ENCODE measurements at regions of chr14 and their contacts with region 1.

Region 1: DNA sequence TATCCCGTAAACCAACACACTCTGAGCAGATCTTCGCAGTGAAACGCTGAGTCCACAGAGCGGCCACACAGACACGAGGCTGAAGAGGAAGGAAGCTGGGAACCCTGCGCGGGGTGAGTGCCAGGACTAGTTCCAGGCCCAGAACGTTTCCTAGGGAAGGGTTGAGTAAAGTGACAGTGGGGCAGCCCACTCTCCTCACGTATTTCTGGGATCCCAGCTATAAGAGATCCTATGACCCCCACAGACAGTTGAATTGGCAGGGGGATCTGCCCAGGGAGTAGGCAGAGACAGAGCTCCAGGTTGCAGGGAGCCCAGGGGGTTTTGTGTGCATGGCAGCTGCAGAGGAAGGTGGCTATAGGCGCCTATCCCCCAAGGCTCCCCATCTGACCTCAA is 51.1 kb downstream of the GTF2A1 start:
- DNase-seq: peak; percentile 66 to 76
- ATAC-seq: peak; percentile 69

Region 2: DNA sequence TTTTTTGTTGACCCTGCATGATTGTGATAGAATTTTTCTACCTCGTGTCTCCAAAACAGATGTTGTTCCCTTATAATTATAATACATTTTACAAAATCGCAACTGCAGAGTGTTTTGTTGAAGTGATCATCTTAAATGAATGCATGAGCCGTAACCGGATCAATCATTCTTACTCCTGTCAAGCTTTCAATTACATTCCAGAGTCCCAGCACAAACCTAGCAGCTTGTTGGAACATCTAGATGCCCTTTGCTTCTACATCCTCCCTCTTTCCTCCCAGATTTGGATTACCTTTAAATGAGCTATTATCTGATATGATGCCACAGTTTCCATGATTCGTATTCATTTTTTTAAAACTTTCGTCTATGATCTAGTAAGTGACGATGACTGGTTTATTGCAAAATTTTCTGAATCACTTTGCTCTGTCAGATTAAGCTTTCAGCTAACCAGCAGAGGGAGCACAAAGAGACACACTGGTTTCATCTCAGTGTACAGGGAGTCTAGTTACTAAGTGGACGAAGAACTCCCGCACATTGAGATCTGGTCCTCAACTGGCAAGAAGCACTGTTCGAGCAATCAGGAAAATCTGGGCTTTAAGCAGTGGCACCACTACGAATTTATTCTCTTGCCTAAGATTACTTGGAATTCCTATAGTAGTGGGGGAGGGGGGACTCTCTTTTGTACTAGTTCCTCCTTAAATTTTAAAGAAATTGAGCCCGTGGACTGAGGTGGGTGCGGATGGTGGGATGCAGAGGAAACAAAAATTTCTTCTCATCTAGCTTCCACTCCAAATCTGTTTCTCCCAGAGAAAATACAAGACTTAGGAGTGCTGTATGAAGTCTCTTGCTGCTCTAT is 173.4 kb before region 1 on chr14:
- intact Hi-C with region 1: loop called in 1 of 2 experiments (anchors 5 kb)
- DNase-seq: no peak
- ATAC-seq: peak; percentile 77

Measured in left colon (tissue), 2 donors.